Spleen (tissue), 13 donors: ENCODE measurements at regions of chr7 and their contacts with region 1.

Region 1: DNA sequence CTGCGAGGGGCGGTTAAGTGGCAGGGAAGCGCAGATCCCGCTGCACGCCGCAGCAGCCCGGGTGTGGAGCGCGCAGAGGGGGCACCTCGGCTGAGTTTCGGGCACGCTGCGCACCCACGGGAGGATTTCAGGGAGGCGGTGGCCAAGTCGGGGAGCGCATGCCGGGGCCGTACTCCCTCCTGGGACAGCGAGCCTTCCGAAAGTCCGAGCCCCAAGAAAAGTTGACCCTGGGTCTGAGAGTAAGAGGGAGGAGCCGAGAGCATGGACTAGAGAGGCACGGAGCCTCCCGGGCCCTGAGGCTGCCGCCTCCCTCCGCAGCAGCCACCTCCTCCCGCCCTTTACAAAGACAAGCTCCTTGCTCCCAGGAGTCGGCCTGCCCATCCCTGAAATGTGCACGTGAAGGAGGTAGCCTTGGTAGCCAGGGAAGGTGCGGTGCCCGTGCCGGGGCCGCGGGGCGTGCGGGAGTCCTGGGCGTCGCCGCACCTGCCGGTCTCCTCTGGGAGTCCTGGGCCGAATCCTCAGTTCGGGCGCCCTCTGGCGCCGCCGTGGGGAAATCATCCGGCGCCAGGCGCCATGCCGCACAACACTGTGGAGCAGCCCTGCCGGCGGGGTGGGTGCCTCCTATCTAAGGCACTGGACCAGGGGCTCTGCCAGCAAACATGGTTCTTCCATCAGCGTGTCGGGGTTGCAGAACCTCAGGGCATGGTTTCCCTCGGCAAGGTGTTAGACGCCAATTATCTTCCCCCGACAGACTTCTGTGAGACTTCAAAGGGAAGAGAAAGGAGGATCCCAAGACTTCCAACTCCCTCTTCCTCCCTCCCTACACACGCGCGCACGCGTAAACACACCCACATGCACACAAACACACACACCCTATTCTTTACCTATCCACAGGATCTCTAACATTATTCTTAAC is 104.0 kb downstream of the TRIL start:
- DNase-seq: peak; percentile 96
- H3K4me3 ChIP-seq: peak overlapping the region; percentile 45 to 77 (median 54)
- H3K27ac ChIP-seq: no peak overlapping the region
- H3K4me1 ChIP-seq: peaks cover 7 to 18% (median 16%) of the 10 kb centered on the region in 6 donors
- H3K27me3 ChIP-seq: peaks cover 0 to 82% (median 19%) of the 10 kb centered on the region in 7 donors
- CTCF ChIP-seq: peak; percentile 53 to 91 (median 83)
- POLR2A ChIP-seq: no peak

Region 2: DNA sequence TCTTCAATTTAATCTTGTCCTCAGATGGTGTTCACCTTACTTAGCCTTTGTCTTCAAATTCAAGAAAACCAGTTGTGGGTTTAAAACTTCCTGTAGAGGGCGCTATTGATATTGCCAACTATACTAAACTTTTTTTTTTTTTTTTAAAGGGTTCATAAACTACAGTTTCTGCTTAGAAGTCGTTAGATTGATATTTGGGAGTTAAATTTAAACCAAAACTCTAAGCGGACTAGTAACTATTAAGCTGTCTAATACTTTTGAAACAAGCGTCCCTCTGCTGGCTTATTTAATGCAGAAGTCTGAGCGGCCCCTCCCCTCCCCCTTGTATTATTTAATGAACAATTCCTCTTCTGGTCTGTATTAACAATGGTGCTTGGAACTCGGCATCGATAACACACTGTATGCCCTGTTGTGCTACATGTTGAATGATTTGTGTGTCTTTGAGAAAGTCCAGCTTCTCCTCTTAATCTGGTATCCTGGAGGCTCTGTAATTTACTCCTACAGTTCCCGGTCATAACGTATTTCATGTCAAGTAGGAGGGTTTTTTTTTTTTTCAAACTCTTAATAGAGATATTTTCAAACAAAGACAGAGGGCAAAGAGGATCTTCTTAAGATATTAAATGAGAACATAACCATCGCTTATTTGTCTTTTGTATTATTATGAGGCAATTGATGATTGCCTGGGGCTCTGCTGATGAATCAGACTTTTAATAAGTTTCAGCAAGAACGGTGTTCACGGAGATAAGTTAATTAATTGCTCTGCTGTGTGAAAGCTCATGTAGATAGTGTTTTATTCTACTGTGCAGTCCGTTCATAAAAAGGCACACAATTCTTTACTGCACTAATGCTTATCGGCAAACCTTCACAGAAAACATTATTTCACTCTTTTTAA is 464.3 kb before region 1 on chr7:
- intact Hi-C with region 1: loop called (anchors 2 kb)
- DNase-seq: no peak
- H3K4me3 ChIP-seq: peak overlapping the region in 1 of 8 donors; percentile 39
- H3K27ac ChIP-seq: no peak overlapping the region
- H3K4me1 ChIP-seq: peaks cover 0 to 6% (median 5%) of the 10 kb centered on the region in 6 donors
- H3K27me3 ChIP-seq: peaks cover 0 to 44% (median 0%) of the 10 kb centered on the region in 7 donors
- CTCF ChIP-seq: peak in 9 of 11 experiments; percentile 37 to 82 (median 65)
- POLR2A ChIP-seq: no peak

Region 3: GRCh38 chr7:28615091-28615490 is 239.0 kb before region 1 on chr7:
- intact Hi-C with region 1: loop called (anchors 10 kb)
- DNase-seq: no peak
- H3K4me3 ChIP-seq: no peak overlapping the region
- H3K27ac ChIP-seq: no peak overlapping the region
- H3K4me1 ChIP-seq: no peaks in the 10 kb centered on the region
- H3K27me3 ChIP-seq: no peaks in the 10 kb centered on the region
- CTCF ChIP-seq: peak in 4 of 11 experiments; percentile 9 to 23 (median 18)
- POLR2A ChIP-seq: no peak